GM12878 (cell line): ENCODE measurements at regions of chr3 and their contacts with region 1.

Region 1: DNA sequence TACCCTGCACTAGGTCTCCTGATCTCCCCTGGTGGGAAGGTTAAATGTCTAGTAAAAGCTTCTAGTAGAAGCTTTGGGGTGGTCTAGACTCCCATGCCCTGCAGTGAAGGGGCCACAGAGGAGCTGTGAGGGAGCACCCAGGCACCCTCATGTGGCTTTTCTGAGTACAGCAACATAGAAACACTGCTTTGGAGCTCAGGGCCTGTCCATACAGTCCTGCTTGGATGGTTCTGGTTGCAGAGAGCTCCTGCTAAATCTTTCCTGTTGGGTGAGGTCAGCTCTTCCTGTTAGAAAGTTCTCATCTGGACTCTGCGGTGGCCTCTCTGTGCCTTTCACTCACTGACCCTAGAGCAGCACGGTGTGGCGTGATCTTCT is 47.8 kb downstream of the GPD1L start:
- DNase-seq: no peak
- ATAC-seq: peak; percentile 44; the same call in 2 of the 3 replicates
- H3K4me3 ChIP-seq: no peak overlapping the region
- H3K27ac ChIP-seq: no peak overlapping the region
- H3K4me1 ChIP-seq: no peaks in the 10 kb centered on the region
- H3K27me3 ChIP-seq: no peaks in the 10 kb centered on the region
- CTCF ChIP-seq: 0 out of 6 replicates have a peak, but pooled peaks of 1 of the 3 experiments have one; percentile 15
- EP300 ChIP-seq: no peak
- POLR2A ChIP-seq: no peak
- RAD21 ChIP-seq: no peak

Region 2: GRCh38 chr3:32018757-32019564 is 135.2 kb before region 1 on chr3:
- CTCF ChIA-PET with region 1: interaction called, 11 read pairs
- POLR2A ChIA-PET with region 1: no interaction called
- RAD21 ChIA-PET with region 1: interaction called, 3 read pairs
- SMC1A ChIA-PET with region 1: no interaction called
- in situ Hi-C with region 1: no loop called
- intact Hi-C with region 1: no loop called
- DNase-seq: no peak
- ATAC-seq: peak; percentile 51; the same call in 2 of the 3 replicates
- H3K4me3 ChIP-seq: no peak overlapping the region
- H3K27ac ChIP-seq: no peak overlapping the region
- H3K4me1 ChIP-seq: no peaks in the 10 kb centered on the region
- H3K27me3 ChIP-seq: no peaks in the 10 kb centered on the region
- CTCF ChIP-seq: peak; percentile 50 to 63 (median 53)
- EP300 ChIP-seq: no peak
- POLR2A ChIP-seq: no peak
- RAD21 ChIP-seq: peak; percentile 66

Region 3: DNA sequence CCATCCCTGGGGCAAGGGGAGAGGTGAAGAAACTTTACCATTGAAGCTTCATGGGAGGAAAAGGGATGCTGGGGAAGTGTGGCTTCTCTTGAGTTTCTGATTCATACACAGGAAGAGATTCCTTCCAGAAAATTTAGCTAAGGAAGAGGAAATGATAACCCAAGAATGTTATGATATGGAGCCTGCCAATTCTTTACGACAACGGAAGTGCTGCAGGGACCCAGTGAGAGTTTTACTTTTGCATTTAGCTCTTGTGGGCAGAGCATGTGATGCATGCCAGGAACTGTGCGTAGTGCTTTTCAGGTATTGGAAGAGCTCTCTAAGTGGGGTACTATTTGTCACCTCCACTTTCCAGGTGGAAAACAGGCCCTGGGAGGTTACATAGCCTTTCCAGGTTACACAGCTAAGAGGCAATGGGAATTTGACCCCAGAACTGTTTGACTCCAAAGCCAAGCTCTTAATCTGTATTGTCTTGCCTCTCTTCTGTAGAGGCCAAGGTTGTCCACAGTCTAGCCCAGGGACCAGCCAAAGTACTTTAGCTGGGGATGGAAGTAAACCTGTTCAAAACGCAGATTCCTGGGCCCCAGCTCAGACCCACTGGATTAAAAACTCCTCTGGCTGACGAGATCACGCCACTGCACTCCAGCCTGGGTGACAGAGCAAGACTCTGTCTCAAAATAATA is 260.5 kb after region 1 on chr3:
- CTCF ChIA-PET with region 1: no interaction called
- POLR2A ChIA-PET with region 1: no interaction called
- RAD21 ChIA-PET with region 1: no interaction called
- SMC1A ChIA-PET with region 1: no interaction called
- in situ Hi-C with region 1: no loop called
- intact Hi-C with region 1: no loop called
- DNase-seq: no peak
- ATAC-seq: peak; percentile 85
- H3K4me3 ChIP-seq: no peak overlapping the region
- H3K27ac ChIP-seq: no peak overlapping the region
- H3K4me1 ChIP-seq: peaks cover 3% of the 10 kb centered on the region
- H3K27me3 ChIP-seq: no peaks in the 10 kb centered on the region
- CTCF ChIP-seq: no peak
- EP300 ChIP-seq: no peak
- POLR2A ChIP-seq: no peak
- RAD21 ChIP-seq: no peak